ENCODE measurements at regions of chr1 and their contacts with region 1.

Region 1: GRCh38 chr1:226814751-226815496 is 55.5 kb upstream of the PSEN2 start:
- DNase-seq: peak; percentile 93
- H3K4me3 ChIP-seq: no peak overlapping the region
- H3K27ac ChIP-seq: peak overlapping the region; percentile 69 to 70
- H3K4me1 ChIP-seq: peaks cover 4% of the 10 kb centered on the region
- H3K27me3 ChIP-seq: no peaks in the 10 kb centered on the region
- CTCF ChIP-seq: no peak
- POLR2A ChIP-seq: no peak

Region 2: GRCh38 chr1:226723657-226724532 is 91.0 kb before region 1 on chr1:
- intact Hi-C with region 1: no loop called
- DNase-seq: no peak
- H3K4me3 ChIP-seq: no peak overlapping the region
- H3K27ac ChIP-seq: peak overlapping the region; percentile 13 to 57
- H3K4me1 ChIP-seq: peaks cover 22% of the 10 kb centered on the region
- H3K27me3 ChIP-seq: no peaks in the 10 kb centered on the region
- CTCF ChIP-seq: no peak
- POLR2A ChIP-seq: no peak

Region 3: GRCh38 chr1:226784081-226785049 is 30.6 kb before region 1 on chr1:
- intact Hi-C with region 1: loop called (anchors 5 kb)
- DNase-seq: no peak
- H3K4me3 ChIP-seq: no peak overlapping the region
- H3K27ac ChIP-seq: peak overlapping the region; percentile 42 to 45
- H3K4me1 ChIP-seq: no peaks in the 10 kb centered on the region
- H3K27me3 ChIP-seq: no peaks in the 10 kb centered on the region
- CTCF ChIP-seq: no peak
- POLR2A ChIP-seq: no peak